OCI-LY7 (cell line): ENCODE measurements at regions of chr5 and their contacts with region 1.

Region 1: DNA sequence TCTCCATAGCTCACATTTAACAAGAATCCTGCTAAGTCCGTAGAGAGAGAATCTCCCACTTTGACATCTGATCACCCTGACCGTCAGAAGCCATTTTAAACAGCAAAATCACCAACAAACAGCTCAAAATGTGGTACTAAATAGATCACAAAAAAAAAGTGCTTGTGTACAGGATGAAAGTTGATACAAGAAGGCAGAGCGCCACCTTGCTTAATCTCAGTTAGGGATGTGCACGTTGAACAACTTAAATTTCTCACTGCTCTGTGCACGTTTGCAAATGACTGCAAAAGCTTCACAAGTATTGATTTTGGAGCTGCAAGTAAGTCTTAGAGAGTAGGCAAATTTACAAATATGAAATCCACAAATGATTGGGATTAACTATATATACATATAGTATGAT is 63.1 kb upstream of the NREP start:
- DNase-seq: peak; percentile 41
- H3K4me3 ChIP-seq: no peak overlapping the region
- H3K27ac ChIP-seq: no peak overlapping the region
- H3K4me1 ChIP-seq: no peaks in the 10 kb centered on the region
- CTCF ChIP-seq: peak; percentile 65

Region 2: GRCh38 chr5:111685971-111686370 is 134.1 kb before region 1 on chr5:
- CTCF ChIA-PET with region 1: no interaction called
- POLR2A ChIA-PET with region 1: no interaction called
- intact Hi-C with region 1: loop called (anchors 5 kb)
- DNase-seq: peak; percentile 65
- H3K4me3 ChIP-seq: no peak overlapping the region
- H3K27ac ChIP-seq: no peak overlapping the region
- H3K4me1 ChIP-seq: peaks cover 10% of the 10 kb centered on the region
- CTCF ChIP-seq: peak; percentile 73

Region 3: GRCh38 chr5:111792471-111793058 is 27.5 kb before region 1 on chr5:
- CTCF ChIA-PET with region 1: no interaction called
- POLR2A ChIA-PET with region 1: no interaction called
- intact Hi-C with region 1: no loop called
- DNase-seq: no peak
- H3K4me3 ChIP-seq: no peak overlapping the region
- H3K27ac ChIP-seq: no peak overlapping the region
- H3K4me1 ChIP-seq: no peaks in the 10 kb centered on the region
- CTCF ChIP-seq: no peak